ENCODE measurements at regions of chr19 and their contacts with region 1.

Region 1: GRCh38 chr19:23273590-23274413 is 23.6 kb upstream of the ZNF724 start:
- DNase-seq: peak; percentile 96
- ATAC-seq: peak; percentile 99
- H3K4me3 Mint-ChIP-seq: peak overlapping the region; percentile 95
- H3K27ac Mint-ChIP-seq: peak overlapping the region; percentile 95
- H3K4me1 Mint-ChIP-seq: peaks cover 28% of the 10 kb centered on the region
- H3K27me3 Mint-ChIP-seq: no peaks in the 10 kb centered on the region

Region 2: DNA sequence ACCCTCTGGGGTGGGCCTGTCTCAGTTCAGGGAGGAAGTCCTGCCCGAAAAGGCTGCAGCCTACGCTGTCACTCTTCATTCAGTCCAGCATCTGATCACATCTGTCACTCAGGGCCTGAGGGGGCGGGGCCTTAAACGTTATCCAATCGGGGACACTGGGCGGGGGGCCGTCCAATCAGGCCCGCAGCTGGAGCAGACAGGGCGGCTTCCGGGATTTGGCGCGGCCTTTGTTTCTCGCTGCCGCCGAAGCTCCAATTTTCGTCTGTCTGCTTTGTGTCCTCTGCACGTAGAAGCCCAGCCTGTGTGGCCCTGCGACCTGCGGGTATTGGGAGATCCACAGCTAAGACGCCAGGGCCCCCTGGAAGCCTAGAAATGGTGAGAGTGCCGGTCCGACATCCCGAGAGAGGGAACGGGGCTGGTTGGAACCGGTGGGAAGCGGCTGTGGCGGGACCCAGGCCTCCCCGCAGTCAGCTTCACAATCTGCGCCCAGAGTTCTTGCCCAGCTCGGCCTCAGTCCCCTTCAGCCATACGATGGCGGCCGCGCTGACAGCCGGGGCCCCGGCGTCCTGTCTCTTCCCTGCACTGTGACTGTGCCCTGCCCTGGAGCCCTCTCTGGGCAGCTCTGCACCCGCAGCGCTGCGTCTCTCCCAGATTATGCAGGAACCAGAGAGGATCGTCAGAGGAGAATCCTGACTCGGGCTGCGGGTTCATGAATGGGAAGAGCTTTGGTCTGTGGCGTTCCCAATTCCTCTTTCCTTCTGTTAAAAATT is 156.8 kb before region 1 on chr19 and contains the start of gene ZNF730:
- CTCF ChIA-PET with region 1: no interaction called
- POLR2A ChIA-PET with region 1: interaction called, 11 read pairs
- DNase-seq: peak; percentile 54
- ATAC-seq: peak; percentile 64
- H3K4me3 Mint-ChIP-seq: peak within 1 kb of the TSS; percentile 80
- H3K27ac Mint-ChIP-seq: peak within 1 kb of the TSS; percentile 81
- H3K4me1 Mint-ChIP-seq: peaks cover 5% of the 10 kb centered on the region
- H3K27me3 Mint-ChIP-seq: no peaks in the 10 kb centered on the region
- total RNA-seq, gene ZNF730: 1.3 to 2.9 TPM

Region 3: DNA sequence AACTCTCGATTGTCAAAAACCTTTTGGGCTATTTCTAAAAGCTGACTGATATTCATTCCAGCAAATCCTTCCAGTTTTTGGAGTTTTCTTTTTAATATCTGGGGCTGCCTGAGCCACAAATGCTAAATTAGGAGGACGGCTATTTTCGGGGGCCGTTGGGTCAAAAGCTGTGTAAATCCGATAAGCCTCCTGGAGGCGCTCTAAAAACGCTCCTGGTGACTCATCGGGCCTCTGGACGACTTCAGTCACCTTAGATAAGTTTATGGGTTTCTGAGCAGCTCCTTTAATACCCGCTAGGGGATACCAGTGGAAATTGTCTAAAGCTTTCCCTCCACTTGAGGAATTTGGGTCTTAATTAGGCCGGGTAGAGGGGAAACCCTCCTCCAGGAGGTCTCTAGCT is 90.6 kb before region 1 on chr19:
- CTCF ChIA-PET with region 1: no interaction called
- POLR2A ChIA-PET with region 1: no interaction called
- DNase-seq: no peak
- ATAC-seq: no peak
- H3K4me3 Mint-ChIP-seq: no peak overlapping the region
- H3K27ac Mint-ChIP-seq: no peak overlapping the region
- H3K4me1 Mint-ChIP-seq: no peaks in the 10 kb centered on the region
- H3K27me3 Mint-ChIP-seq: no peaks in the 10 kb centered on the region

Region 4: DNA sequence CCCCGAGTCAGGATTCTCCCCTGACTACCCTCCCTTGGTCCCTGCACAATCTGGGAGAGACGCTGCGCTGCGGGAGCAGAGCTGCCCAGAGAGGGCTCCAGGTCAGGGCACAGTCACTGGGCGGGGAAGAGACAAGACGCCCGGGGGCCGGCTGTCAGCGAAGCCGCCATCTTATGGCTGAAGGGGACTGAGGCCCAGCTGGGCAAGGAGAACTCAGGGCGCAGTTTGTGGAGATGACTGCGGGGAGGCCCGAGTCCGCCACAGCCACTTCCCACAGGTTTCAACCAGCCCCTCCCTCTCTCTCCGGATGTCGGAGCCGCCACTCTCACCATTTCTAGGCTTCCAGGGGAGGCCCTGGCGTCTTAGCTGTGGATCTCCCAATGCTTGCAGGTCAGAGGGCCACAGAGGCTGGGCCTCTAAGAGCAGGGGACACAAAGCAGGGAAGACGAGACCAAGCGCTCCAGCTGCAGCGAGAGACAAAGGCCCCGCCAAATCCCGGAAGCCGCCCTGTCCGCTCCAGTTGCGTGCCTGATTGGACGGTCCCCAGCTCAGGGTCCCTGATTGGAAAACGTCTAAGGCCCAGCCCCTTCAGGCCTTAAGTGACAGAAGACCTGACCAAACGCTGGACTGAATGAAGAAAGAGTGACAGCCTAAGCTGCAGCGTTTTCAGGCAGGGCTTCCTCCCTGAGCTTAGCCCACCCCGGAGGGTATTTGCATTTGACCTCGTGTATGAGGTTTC is 23.7 kb before region 1 on chr19 and contains the start of gene ZNF724:
- CTCF ChIA-PET with region 1: interaction called, 5 read pairs
- POLR2A ChIA-PET with region 1: interaction called, 29 read pairs
- DNase-seq: peak; percentile 96
- ATAC-seq: peak; percentile 99
- H3K4me3 Mint-ChIP-seq: peak within 1 kb of the TSS; percentile 98
- H3K27ac Mint-ChIP-seq: peak within 1 kb of the TSS; percentile 98
- H3K4me1 Mint-ChIP-seq: peaks cover 13% of the 10 kb centered on the region
- H3K27me3 Mint-ChIP-seq: no peaks in the 10 kb centered on the region
- total RNA-seq, gene ZNF724: 16.1 to 17.4 TPM

Region 5: GRCh38 chr19:23365222-23365621 is 91.4 kb after region 1 on chr19:
- CTCF ChIA-PET with region 1: no interaction called
- POLR2A ChIA-PET with region 1: no interaction called
- DNase-seq: no peak
- ATAC-seq: no peak
- H3K4me3 Mint-ChIP-seq: no peak overlapping the region
- H3K27ac Mint-ChIP-seq: no peak overlapping the region
- H3K4me1 Mint-ChIP-seq: no peaks in the 10 kb centered on the region
- H3K27me3 Mint-ChIP-seq: no peaks in the 10 kb centered on the region

Measured in activated CD8-positive, alpha-beta T cell treated with anti-CD3 and anti-CD28 coated beads, Interleukin-2, amount 10 ng/mL, durations not matched to agents 7 days and 5 days (primary cell).